ENCODE measurements at regions of chr3 and their contacts with region 1.

Region 1: DNA sequence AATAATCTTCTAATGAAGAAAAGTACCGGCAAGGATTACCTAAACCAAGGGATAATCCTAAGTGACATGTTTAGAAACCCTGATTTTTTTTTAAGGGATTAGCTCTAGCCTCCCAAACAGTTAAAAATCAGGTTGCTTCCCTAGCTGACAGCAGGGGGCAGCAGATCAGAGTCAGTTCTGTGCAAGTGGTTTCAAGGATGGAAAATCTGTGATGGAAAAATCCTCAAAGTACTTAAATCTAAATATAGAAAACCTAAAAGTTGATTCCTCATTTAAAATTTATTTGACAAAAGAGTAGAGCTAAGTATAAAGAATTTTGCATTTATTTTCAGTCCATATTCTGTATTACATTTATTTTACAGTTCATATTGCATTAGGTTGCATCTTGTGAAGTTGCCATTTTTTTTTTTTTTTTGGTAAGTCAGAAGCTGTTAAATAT is 107.6 kb downstream of the PEX5L start:
- DNase-seq: peak; percentile 60
- ATAC-seq: peak; percentile 85
- H3K4me3 ChIP-seq: no peak overlapping the region
- H3K27ac ChIP-seq: no peak overlapping the region
- H3K4me1 ChIP-seq: no peaks in the 10 kb centered on the region
- H3K27me3 ChIP-seq: no peaks in the 10 kb centered on the region
- CTCF ChIP-seq: peak; percentile 76
- POLR2A ChIP-seq: no peak
- RAD21 ChIP-seq: peak; percentile 60

Region 2: DNA sequence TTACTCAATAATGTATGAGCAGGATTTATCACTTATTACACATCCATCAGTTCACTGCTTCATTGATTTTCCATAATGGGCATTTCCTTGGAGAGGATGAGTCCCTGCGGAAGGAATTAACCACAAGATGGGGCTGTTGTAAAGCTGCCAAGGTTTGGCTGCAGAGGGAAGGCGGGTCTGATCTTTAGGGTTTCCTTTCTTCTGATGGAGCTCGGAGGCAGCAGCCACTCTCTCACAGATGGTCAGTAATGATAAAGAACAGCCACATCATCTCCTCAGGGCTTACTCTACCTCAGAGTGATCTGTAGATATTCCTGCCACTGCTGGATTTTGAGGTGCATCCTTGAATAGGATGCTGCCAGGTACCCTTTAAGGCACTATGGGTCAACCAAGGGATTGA is 161.0 kb before region 1 on chr3:
- CTCF ChIA-PET with region 1: interaction called, 3 read pairs
- POLR2A ChIA-PET with region 1: no interaction called
- dilution Hi-C with region 1: no loop called
- in situ Hi-C with region 1: no loop called
- intact Hi-C with region 1: loop called (anchors 5 kb)
- DNase-seq: peak; percentile 70
- ATAC-seq: peak; percentile 86
- H3K4me3 ChIP-seq: no peak overlapping the region
- H3K27ac ChIP-seq: no peak overlapping the region
- H3K4me1 ChIP-seq: no peaks in the 10 kb centered on the region
- H3K27me3 ChIP-seq: no peaks in the 10 kb centered on the region
- CTCF ChIP-seq: peak; percentile 70
- POLR2A ChIP-seq: no peak
- RAD21 ChIP-seq: peak; percentile 79

Region 3: GRCh38 chr3:180250169-180250568 is 321.1 kb after region 1 on chr3:
- CTCF ChIA-PET with region 1: no interaction called
- POLR2A ChIA-PET with region 1: no interaction called
- dilution Hi-C with region 1: no loop called
- in situ Hi-C with region 1: no loop called
- intact Hi-C with region 1: no loop called
- DNase-seq: peak; percentile 52
- ATAC-seq: no peak
- H3K4me3 ChIP-seq: no peak overlapping the region
- H3K27ac ChIP-seq: no peak overlapping the region
- H3K4me1 ChIP-seq: no peaks in the 10 kb centered on the region
- H3K27me3 ChIP-seq: no peaks in the 10 kb centered on the region
- CTCF ChIP-seq: no peak
- POLR2A ChIP-seq: no peak
- RAD21 ChIP-seq: no peak

Measured in IMR-90 (cell line).